ENCODE measurements at regions of chr17 and their contacts with region 1.

Region 1: GRCh38 chr17:75764711-75765421 is at the start of gene GALK1:
- DNase-seq: peak; percentile 85
- ATAC-seq: peak; percentile 94
- H3K4me3 Mint-ChIP-seq: peak within 1 kb of the TSS; percentile 76
- H3K27ac Mint-ChIP-seq: peak within 1 kb of the TSS; percentile 70
- H3K4me1 Mint-ChIP-seq: peaks cover 11% of the 10 kb centered on the region
- H3K27me3 Mint-ChIP-seq: no peaks in the 10 kb centered on the region
- total RNA-seq, gene GALK1: 46.1 to 53.7 TPM

Region 2: GRCh38 chr17:75779231-75779986 is 14.5 kb after region 1 on chr17:
- CTCF ChIA-PET with region 1: interaction called, 57 read pairs
- DNase-seq: peak; percentile 98
- ATAC-seq: peak; percentile 74
- H3K4me3 Mint-ChIP-seq: peak overlapping the region; percentile 86
- H3K27ac Mint-ChIP-seq: peak overlapping the region; percentile 99
- H3K4me1 Mint-ChIP-seq: peaks cover 51% of the 10 kb centered on the region
- H3K27me3 Mint-ChIP-seq: peaks cover 2% of the 10 kb centered on the region

Region 3: DNA sequence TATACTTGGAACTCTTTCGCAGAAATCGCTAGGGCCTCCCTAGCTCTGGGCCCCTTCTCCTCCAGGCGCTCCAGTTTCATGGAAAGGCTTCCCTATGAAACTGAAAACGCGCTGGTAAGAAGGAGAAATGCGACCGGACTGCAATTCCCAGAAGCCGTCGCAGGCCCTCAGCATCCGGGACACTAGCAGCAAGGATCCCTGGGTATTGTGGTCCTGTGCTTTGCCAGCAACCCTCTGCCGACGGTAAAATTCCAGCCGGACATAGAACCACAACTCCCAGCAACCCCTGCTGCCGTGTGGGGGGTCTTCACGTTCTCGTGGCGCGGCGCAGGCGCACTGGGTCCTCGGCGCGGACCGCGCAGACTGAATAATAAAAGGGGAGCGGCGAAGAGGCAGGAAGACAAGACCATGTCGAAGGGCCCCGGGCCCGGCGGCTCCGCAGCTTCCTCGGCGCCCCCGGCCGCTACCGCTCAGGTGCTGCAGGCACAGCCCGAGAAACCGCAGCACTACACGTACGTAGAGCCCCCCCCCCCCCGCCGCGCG is 19.7 kb after region 1 on chr17 and contains the start of gene UNK:
- CTCF ChIA-PET with region 1: interaction called, 13 read pairs
- DNase-seq: peak; percentile 99
- ATAC-seq: peak; percentile 72
- H3K4me3 Mint-ChIP-seq: peak within 1 kb of the TSS; percentile 79
- H3K27ac Mint-ChIP-seq: peak within 1 kb of the TSS; percentile 100
- H3K4me1 Mint-ChIP-seq: peaks cover 50% of the 10 kb centered on the region
- H3K27me3 Mint-ChIP-seq: peaks cover 1% of the 10 kb centered on the region
- total RNA-seq, gene UNK: 32.8 to 33.1 TPM

Region 4: DNA sequence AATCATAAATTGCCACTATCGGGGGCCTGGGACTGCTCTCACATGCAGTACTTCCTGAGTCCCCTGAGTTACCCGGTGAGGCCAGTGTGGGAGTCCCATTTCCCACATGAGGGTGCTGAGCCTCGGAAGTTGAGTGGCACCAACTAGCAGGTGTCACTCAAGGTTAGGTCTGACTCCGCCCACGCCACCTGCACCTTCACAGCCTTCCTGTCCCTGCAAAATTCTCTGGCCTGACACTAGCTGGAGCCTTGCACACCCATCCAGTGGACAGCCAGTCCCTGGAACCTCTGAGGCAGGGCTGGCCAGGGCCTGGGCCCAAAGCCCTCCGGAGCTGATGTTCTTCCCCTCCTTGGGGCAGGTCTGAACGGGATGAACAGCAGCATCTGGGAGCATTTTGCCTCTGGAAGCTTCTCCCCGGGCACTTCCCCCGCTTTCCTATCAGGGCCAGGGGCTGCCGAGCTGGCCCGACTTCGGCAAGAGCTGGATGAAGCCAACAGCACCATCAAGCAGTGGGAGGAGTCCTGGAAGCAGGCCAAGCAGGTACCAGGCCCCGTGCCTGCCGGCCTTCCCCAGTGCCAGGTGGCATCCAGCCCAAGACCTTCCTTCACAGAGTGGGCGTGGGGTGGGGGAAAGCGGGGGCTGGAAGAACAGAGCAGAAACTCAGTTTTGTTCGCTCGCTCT is 57.4 kb after region 1 on chr17:
- CTCF ChIA-PET with region 1: interaction called, 12 read pairs
- DNase-seq: no peak
- ATAC-seq: no peak
- H3K4me3 Mint-ChIP-seq: no peak overlapping the region
- H3K27ac Mint-ChIP-seq: peak overlapping the region; percentile 29
- H3K4me1 Mint-ChIP-seq: peaks cover 14% of the 10 kb centered on the region
- H3K27me3 Mint-ChIP-seq: no peaks in the 10 kb centered on the region

Region 5: GRCh38 chr17:75827252-75828115 is 62.6 kb after region 1 on chr17:
- CTCF ChIA-PET with region 1: interaction called, 12 read pairs
- DNase-seq: peak; percentile 78
- ATAC-seq: peak; percentile 59
- H3K4me3 Mint-ChIP-seq: peak overlapping the region; percentile 8
- H3K27ac Mint-ChIP-seq: peak overlapping the region; percentile 90
- H3K4me1 Mint-ChIP-seq: peaks cover 17% of the 10 kb centered on the region
- H3K27me3 Mint-ChIP-seq: no peaks in the 10 kb centered on the region

Region 6: GRCh38 chr17:75845049-75845860 is 80.4 kb after region 1 on chr17:
- CTCF ChIA-PET with region 1: interaction called, 39 read pairs
- DNase-seq: peak; percentile 79
- ATAC-seq: peak; percentile 52
- H3K4me3 Mint-ChIP-seq: peak overlapping the region; percentile 39
- H3K27ac Mint-ChIP-seq: peak overlapping the region; percentile 61
- H3K4me1 Mint-ChIP-seq: peaks cover 27% of the 10 kb centered on the region
- H3K27me3 Mint-ChIP-seq: no peaks in the 10 kb centered on the region

Region 7: DNA sequence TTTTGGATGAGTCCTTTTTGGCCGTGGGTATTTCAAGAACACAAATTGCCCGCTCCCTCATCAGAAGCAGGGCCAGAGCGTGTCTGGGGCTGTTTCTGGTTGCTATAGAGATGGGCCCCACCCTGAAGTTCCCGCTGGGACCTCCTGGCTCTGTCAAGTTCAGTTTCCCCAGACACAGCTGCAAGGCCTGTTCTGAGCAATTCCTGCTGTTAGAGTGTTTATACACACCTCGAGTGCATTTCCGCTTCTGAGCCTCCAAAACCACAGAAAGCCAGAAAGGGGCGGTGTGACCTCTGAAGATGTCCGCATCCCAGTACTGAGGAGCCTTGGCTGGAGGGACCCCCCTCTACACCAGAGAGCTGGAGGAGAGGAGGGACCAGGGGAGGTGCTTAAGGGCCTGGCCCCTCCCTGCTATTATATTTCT is 99.6 kb after region 1 on chr17:
- CTCF ChIA-PET with region 1: interaction called, 13 read pairs
- DNase-seq: peak; percentile 90
- ATAC-seq: peak; percentile 85
- H3K4me3 Mint-ChIP-seq: peak overlapping the region; percentile 44
- H3K27ac Mint-ChIP-seq: peak overlapping the region; percentile 94
- H3K4me1 Mint-ChIP-seq: peaks cover 22% of the 10 kb centered on the region
- H3K27me3 Mint-ChIP-seq: no peaks in the 10 kb centered on the region

Measured in activated CD8-positive, alpha-beta memory T cell treated with anti-CD3 and anti-CD28 coated beads, Interleukin-2, amount 10 ng/mL, durations not matched to agents 7 days and 5 days (primary cell).